IMR-90 (cell line): ENCODE measurements at regions of chr9 and their contacts with region 1.

Region 1: DNA sequence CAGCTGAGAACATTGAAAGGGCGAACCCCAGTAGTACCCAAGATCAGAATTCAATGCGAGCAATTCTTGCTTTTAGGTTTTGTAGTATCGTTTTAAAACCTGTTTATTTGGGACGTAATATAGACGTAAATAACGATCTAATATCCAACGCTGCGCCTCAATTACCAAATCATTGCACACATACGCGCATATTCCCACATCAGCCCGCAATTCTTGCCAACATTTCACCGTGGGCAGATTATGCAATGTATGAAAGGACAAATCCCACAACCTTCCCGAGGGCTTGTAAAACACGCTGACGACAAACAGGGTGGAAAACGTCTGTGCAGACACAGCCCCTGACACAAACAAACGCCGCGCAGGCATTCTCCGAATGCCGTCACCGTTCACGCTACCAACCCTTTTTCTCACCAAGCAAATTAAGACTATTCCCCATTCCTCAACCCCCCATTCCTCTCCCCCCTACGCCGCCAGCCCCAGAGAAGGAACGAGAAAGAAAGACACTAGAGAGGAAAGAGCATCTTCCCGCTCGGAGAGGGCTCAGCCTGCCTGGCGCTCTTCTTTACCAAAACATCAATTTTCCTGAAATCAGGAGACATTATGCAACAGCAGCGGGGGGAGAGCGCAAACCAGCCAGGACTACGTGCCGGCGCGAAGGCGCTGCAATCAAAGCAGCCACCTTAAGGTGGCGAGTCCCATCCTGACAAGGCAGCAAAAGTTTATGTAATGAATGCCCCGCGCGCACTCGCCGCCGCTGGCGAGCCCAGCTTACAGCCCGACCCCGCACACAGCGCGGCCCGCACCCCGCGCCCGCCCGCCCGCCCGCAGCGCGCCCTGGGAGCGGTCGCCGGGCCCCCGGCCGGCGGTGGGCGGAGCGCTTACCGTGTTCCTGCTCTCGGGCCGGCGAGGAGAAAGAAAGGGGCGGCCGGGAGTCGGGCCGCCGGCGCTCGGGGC is 597 bp downstream of the NFIL3 start:
- DNase-seq: peak; percentile 85
- ATAC-seq: peak; percentile 12
- H3K4me3 ChIP-seq: peak overlapping the region; percentile 58
- H3K27ac ChIP-seq: peak overlapping the region; percentile 90
- H3K4me1 ChIP-seq: peaks cover 10% of the 10 kb centered on the region
- H3K27me3 ChIP-seq: no peaks in the 10 kb centered on the region
- CTCF ChIP-seq: 0 out of 2 replicates have a peak, but pooled peaks have one; percentile 21
- POLR2A ChIP-seq: peak; percentile 87
- RAD21 ChIP-seq: peak; percentile 12; the same call in 1 of the 2 replicates

Region 2: DNA sequence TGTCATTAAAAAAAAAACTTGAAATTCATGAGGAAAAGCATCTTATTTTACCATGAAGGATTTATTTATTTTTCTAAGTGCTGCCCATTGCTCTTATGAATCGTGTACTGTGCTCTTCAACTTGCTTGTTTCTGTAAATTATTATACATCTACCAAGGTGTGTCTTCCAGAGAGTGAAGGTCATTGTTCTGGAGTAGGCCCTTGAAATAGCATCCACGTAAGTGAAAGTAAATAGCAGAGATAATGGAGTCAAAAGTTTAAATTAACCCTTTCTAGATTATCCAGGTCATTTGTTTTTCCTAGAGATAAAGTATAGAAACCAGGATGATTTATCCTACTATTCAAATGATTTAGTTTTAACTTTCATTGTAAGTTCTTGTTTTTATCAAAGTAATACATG is 1253.5 kb before region 1 on chr9:
- CTCF ChIA-PET with region 1: no interaction called
- POLR2A ChIA-PET with region 1: no interaction called
- dilution Hi-C with region 1: no loop called
- in situ Hi-C with region 1: no loop called
- intact Hi-C with region 1: loop called (anchors 10 kb)
- DNase-seq: no peak
- ATAC-seq: no peak
- H3K4me3 ChIP-seq: no peak overlapping the region
- H3K27ac ChIP-seq: no peak overlapping the region
- H3K4me1 ChIP-seq: no peaks in the 10 kb centered on the region
- H3K27me3 ChIP-seq: no peaks in the 10 kb centered on the region
- CTCF ChIP-seq: no peak
- POLR2A ChIP-seq: no peak
- RAD21 ChIP-seq: no peak

Region 3: GRCh38 chr9:91089405-91090129 is 333.5 kb before region 1 on chr9:
- CTCF ChIA-PET with region 1: interaction called, 13 read pairs
- POLR2A ChIA-PET with region 1: interaction called, 5 read pairs
- dilution Hi-C with region 1: no loop called
- in situ Hi-C with region 1: no loop called
- intact Hi-C with region 1: no loop called
- DNase-seq: peak; percentile 73
- ATAC-seq: peak; percentile 86
- H3K4me3 ChIP-seq: no peak overlapping the region
- H3K27ac ChIP-seq: peak overlapping the region; percentile 21
- H3K4me1 ChIP-seq: peaks cover 11% of the 10 kb centered on the region
- H3K27me3 ChIP-seq: no peaks in the 10 kb centered on the region
- CTCF ChIP-seq: peak; percentile 60
- POLR2A ChIP-seq: peak; percentile 41; the same call in 1 of the 2 replicates
- RAD21 ChIP-seq: peak; percentile 79

Region 4: GRCh38 chr9:91285729-91286353 is 137.2 kb before region 1 on chr9:
- CTCF ChIA-PET with region 1: no interaction called
- POLR2A ChIA-PET with region 1: no interaction called
- dilution Hi-C with region 1: no loop called
- in situ Hi-C with region 1: no loop called
- intact Hi-C with region 1: loop called (anchors 5 kb)
- DNase-seq: peak; percentile 54
- ATAC-seq: peak; percentile 51; the same call in 1 of the 2 replicates
- H3K4me3 ChIP-seq: no peak overlapping the region
- H3K27ac ChIP-seq: no peak overlapping the region
- H3K4me1 ChIP-seq: peaks cover 4% of the 10 kb centered on the region
- H3K27me3 ChIP-seq: no peaks in the 10 kb centered on the region
- CTCF ChIP-seq: no peak
- POLR2A ChIP-seq: no peak
- RAD21 ChIP-seq: no peak

Region 5: GRCh38 chr9:91495450-91495849 is 72.4 kb after region 1 on chr9:
- CTCF ChIA-PET with region 1: interaction called, 3 read pairs
- POLR2A ChIA-PET with region 1: no interaction called
- dilution Hi-C with region 1: no loop called
- in situ Hi-C with region 1: loop called (anchors 5 kb)
- intact Hi-C with region 1: loop called (anchors 2 kb)
- DNase-seq: peak; percentile 98
- ATAC-seq: peak; percentile 93
- H3K4me3 ChIP-seq: no peak overlapping the region
- H3K27ac ChIP-seq: peak overlapping the region; percentile 69; the same call in 1 of the 2 replicates
- H3K4me1 ChIP-seq: peaks cover 16% of the 10 kb centered on the region
- H3K27me3 ChIP-seq: no peaks in the 10 kb centered on the region
- CTCF ChIP-seq: no peak
- POLR2A ChIP-seq: peak; percentile 88
- RAD21 ChIP-seq: 0 out of 2 replicates have a peak, but pooled peaks have one; percentile 4

Region 6: DNA sequence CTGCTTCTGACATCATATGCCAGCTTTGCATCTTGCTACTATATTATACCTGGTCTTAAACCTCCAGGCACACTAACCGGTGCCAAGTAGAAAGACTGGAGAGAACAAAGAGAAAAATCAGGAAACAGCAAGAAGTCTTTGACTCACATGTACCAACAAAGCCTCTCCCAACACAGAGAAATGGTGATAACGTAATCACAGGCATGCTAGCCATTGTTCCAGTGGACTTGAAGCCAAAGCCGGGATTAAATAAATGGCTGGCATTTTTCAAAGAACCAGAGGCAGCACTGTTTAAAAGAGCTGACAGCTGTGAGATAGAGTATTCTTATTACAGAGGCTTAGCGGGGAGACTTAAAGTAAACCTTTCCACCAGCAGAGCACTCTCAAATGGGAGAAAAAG is 149.0 kb after region 1 on chr9:
- CTCF ChIA-PET with region 1: no interaction called
- POLR2A ChIA-PET with region 1: no interaction called
- dilution Hi-C with region 1: no loop called
- in situ Hi-C with region 1: no loop called
- intact Hi-C with region 1: no loop called
- DNase-seq: peak; percentile 34
- ATAC-seq: peak; percentile 49
- H3K4me3 ChIP-seq: no peak overlapping the region
- H3K27ac ChIP-seq: no peak overlapping the region
- H3K4me1 ChIP-seq: no peaks in the 10 kb centered on the region
- H3K27me3 ChIP-seq: peaks cover 11% of the 10 kb centered on the region
- CTCF ChIP-seq: no peak
- POLR2A ChIP-seq: no peak
- RAD21 ChIP-seq: no peak

Region 7: GRCh38 chr9:91727316-91727861 is 304.4 kb after region 1 on chr9:
- CTCF ChIA-PET with region 1: interaction called, 4 read pairs
- POLR2A ChIA-PET with region 1: interaction called, 5 read pairs
- dilution Hi-C with region 1: no loop called
- in situ Hi-C with region 1: no loop called
- intact Hi-C with region 1: loop called (anchors 1 kb)
- DNase-seq: peak; percentile 56
- ATAC-seq: peak; percentile 94
- H3K4me3 ChIP-seq: no peak overlapping the region
- H3K27ac ChIP-seq: no peak overlapping the region
- H3K4me1 ChIP-seq: peaks cover 5% of the 10 kb centered on the region; the same call in 1 of the 2 replicates
- H3K27me3 ChIP-seq: no peaks in the 10 kb centered on the region
- CTCF ChIP-seq: peak; percentile 73
- POLR2A ChIP-seq: no peak
- RAD21 ChIP-seq: peak; percentile 76